Dorsolateral prefrontal cortex (tissue), 120 donors: ENCODE measurements at regions of chr2 and their contacts with region 1.

Region 1: GRCh38 chr2:152036611-152037469 is 62.0 kb downstream of the CACNB4 start:
- DNase-seq: peak; percentile 38 to 83 (median 71)
- H3K4me3 ChIP-seq: peak overlapping the region in 4 of 59 donors; percentile 3 to 16 (median 13)
- H3K27ac ChIP-seq: peak overlapping the region in 27 of 59 donors; percentile 23 to 79 (median 62)
- H3K27me3 ChIP-seq: no peaks in the 10 kb centered on the region
- CTCF ChIP-seq: peak; percentile 58 to 95 (median 83)

Region 2: GRCh38 chr2:152175458-152176325 is 138.9 kb after region 1 on chr2 and contains the start of gene STAM2:
- intact Hi-C with region 1: loop called (anchors 2 to 5 kb)
- DNase-seq: peak; percentile 83 to 93 (median 88)
- H3K4me3 ChIP-seq: peak within 1 kb of the TSS; percentile 69 to 98 (median 85)
- H3K27ac ChIP-seq: peak within 1 kb of the TSS; percentile 88 to 100 (median 97)
- H3K27me3 ChIP-seq: no peaks in the 10 kb centered on the region
- CTCF ChIP-seq: peak; percentile 89 to 99 (median 97)
- total RNA-seq, gene STAM2: 25.9 to 44.5 (median 34.8) TPM

Region 3: GRCh38 chr2:152627351-152627957 is 590.6 kb after region 1 on chr2:
- intact Hi-C with region 1: loop called (anchors 10 kb)
- DNase-seq: no peak
- H3K4me3 ChIP-seq: no peak overlapping the region
- H3K27ac ChIP-seq: peak overlapping the region in 54 of 59 donors; percentile 10 to 86 (median 66)
- H3K27me3 ChIP-seq: no peaks in the 10 kb centered on the region
- CTCF ChIP-seq: peak; percentile 20 to 91 (median 68)

Region 4: GRCh38 chr2:152635635-152636298 is 598.9 kb after region 1 on chr2:
- intact Hi-C with region 1: loop called in 1 of 2 experiments (anchors 10 kb)
- DNase-seq: peak in 9 of 10 donors; percentile 31 to 76 (median 63)
- H3K4me3 ChIP-seq: no peak overlapping the region
- H3K27ac ChIP-seq: peak overlapping the region in 46 of 59 donors; percentile 1 to 73 (median 55)
- H3K27me3 ChIP-seq: no peaks in the 10 kb centered on the region
- CTCF ChIP-seq: peak; percentile 70 to 95 (median 87)

Region 5: DNA sequence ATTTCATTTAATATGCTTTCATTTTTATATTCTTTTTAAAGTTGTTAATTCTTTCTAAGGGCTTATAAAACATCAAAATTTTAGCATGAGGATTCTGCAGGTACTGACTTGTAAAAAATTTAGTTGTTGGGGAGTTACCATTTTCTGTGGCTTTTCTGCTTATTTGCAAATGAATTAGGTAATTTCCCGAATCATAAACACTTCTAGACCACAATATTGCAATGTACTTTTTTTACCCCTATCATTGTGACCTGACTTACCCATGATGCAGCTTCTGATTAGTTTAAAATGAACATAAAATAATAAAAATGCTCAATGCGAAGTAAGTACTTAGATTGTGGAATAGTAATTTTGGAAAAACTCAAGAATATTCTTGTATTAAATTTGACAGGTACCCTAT is 693.0 kb after region 1 on chr2:
- intact Hi-C with region 1: loop called in 1 of 2 experiments (anchors 10 kb)
- DNase-seq: no peak
- H3K4me3 ChIP-seq: no peak overlapping the region
- H3K27ac ChIP-seq: no peak overlapping the region
- H3K27me3 ChIP-seq: no peaks in the 10 kb centered on the region
- CTCF ChIP-seq: no peak

Region 6: GRCh38 chr2:153478334-153479261 is 1441.8 kb after region 1 on chr2 and contains the start of gene RPRM:
- intact Hi-C with region 1: loop called in 1 of 2 experiments (anchors 10 kb)
- DNase-seq: peak; percentile 46 to 83 (median 64)
- H3K4me3 ChIP-seq: peak within 1 kb of the TSS; percentile 35 to 75 (median 59)
- H3K27ac ChIP-seq: peak within 1 kb of the TSS in 13 of 59 donors; percentile 10 to 61 (median 34)
- H3K27me3 ChIP-seq: peaks cover 0 to 78% (median 45%) of the 10 kb centered on the region in 45 donors
- CTCF ChIP-seq: peak; percentile 54 to 97 (median 89)
- total RNA-seq, gene RPRM: 1.8 to 28.0 (median 10.7) TPM

Region 7: DNA sequence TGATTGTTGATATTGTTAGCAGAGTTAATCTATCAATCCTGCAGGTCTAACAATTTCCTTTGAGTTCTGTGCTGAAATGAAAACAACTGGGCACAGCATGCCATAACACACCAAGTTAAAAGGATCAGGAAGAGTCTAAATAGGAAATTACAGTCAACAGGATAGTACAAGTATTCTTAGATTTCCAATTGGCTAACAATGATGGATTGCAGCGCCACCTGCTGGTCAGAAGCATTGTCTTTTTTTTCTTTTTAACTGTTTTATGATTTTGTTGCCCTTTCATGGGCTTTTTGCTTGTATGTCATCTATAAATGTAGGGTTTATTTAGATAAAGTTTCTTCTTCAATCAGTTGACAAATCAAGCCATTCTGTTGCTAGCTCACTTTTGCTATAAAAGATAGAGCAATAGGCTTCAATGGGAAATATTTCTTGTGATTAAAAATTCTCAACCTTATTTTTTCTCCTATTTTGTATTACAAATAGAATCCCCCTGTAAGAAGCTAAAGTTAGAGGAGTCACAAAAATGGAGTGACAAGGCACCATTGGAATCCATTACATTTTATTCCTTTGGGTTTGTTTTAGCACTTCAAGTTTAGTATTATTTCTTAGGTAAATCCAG is 1482.5 kb after region 1 on chr2:
- intact Hi-C with region 1: loop called in 1 of 2 experiments (anchors 5 kb)
- DNase-seq: peak in 7 of 10 donors; percentile 28 to 79 (median 52)
- H3K4me3 ChIP-seq: no peak overlapping the region
- H3K27ac ChIP-seq: no peak overlapping the region
- H3K27me3 ChIP-seq: peaks cover 0 to 8% (median 0%) of the 10 kb centered on the region in 45 donors
- CTCF ChIP-seq: peak; percentile 78 to 100 (median 92)